AG04449 (cell line): ENCODE measurements at regions of chr1 and their contacts with region 1.

Region 1: DNA sequence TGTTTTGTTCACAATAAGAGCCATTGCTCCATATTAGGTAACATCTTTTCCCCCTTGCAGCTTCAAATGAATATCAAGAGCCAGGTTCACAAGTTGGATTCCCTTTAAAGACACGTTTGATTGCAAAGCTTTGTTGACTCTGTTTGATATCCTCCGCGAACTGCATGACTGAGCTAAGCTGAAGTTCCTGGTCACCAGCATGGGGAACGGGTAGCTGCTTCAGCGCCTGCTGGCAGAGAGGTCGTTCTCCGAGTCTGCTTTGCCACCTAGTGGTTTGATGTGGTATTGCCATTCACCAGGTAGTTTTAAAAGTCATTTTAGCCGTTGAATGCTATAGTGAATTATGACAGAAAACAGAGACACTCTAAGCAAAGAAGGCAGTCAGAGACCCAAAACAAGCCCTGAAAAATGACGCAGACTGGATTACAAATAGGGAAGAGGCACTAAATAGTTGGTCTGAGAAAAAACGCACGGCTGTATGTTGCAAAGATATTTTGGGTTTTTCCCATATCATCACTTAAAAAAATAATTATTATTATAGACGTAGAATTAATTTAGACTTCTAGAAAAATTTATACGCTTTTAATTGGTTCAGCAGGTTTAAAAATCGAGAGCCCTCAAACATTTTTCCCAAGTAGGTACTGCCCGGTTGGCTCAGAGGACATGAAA is 193.5 kb upstream of the FMN2 start:
- DNase-seq: peak; percentile 31
- H3K4me3 ChIP-seq: no peak overlapping the region
- CTCF ChIP-seq: peak; percentile 88

Region 2: GRCh38 chr1:239909898-239910297 is 11.7 kb after region 1 on chr1:
- CTCF ChIA-PET with region 1: interaction called, 15 read pairs
- POLR2A ChIA-PET with region 1: no interaction called
- DNase-seq: peak; percentile 12
- H3K4me3 ChIP-seq: no peak overlapping the region
- CTCF ChIP-seq: no peak